Cardiac septum (tissue), 1 donor: ENCODE measurements at regions of chr6 and their contacts with region 1.

Region 1: DNA sequence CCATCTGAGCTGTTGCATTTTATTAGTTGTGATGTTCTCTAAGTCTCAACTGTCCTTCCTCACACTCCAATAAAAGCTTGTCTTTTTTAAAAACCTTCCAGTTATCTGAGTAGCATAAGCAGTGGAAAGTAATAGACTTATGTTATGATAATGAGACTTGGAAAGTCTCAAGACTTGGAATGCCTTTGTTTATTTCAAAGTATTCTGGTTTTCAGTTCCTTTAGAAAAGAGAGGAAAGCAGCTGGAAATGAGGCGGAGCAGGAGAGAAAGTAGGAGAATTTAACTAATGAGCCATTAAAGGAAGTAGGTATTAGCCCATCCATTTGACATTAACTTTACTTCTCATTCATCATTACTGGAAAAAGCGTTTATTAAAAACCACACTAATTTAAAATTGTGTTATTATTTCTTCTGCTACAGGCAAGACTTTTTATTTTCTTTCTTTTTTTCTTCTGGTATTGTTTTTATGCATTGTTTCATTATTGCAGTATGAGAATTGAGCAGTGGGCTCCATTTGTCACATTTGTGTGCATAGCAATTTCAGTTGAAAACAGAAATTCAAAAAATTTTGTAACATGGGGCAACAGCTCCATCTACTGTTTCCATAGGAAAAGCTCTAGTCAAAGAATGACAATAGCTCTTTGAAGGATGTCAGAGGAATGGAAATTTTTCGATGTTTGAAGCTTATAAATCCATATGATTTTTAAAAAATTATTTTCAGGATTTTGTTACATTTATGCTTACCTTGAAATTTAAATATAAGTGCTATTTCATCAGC is 194.8 kb downstream of the COL9A1 start:
- DNase-seq: no peak

Region 2: GRCh38 chr6:69732640-69733039 is 375.4 kb before region 1 on chr6:
- intact Hi-C with region 1: loop called (anchors 10 kb)
- DNase-seq: no peak

Region 3: DNA sequence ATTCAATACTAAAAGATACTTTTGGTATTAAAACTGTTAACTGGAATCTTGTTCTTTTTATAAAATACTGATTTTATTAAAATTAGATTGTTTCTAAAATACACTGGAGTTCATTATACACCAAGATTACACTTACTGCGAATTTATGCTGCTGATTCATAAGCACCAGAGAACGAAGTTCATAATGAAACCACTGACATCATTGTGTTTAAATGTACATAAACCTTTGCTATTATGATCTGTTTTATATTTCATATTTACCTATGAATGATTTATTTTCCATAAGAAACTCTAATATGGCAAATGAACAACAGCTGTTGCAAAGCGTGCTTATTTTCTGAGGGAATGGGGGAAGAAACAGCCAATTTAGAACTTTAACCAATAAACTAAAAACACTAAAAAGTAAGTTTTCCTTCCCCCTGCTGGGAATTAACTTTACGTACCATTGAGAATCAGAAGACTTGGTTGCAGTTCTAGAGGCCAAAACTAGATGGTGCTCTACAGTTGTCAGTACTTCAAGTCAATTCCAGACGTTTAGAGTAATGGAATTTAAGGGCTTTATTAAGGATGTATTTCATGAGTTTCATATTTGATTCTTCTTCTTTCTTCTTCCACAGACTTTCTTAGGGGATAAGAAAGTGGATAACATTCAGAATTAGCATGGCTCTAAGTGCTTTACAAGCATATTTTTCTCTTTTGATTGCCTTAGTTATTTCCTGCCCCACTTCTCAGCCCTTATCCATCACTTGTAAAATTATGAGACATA is 272.4 kb before region 1 on chr6:
- intact Hi-C with region 1: loop called (anchors 5 kb)
- DNase-seq: no peak